PC-9 (cell line): ENCODE measurements at regions of chr17 and their contacts with region 1.

Region 1: GRCh38 chr17:70254735-70255460 is 85.6 kb downstream of the KCNJ2 start:
- DNase-seq: no peak
- H3K4me3 ChIP-seq: no peak overlapping the region
- H3K27ac ChIP-seq: no peak overlapping the region
- H3K4me1 ChIP-seq: no peaks in the 10 kb centered on the region; the same call in 1 of the 2 replicates
- H3K27me3 ChIP-seq: no peaks in the 10 kb centered on the region
- CTCF ChIP-seq: no peak

Region 2: GRCh38 chr17:70116919-70117318 is 138.0 kb before region 1 on chr17:
- CTCF ChIA-PET with region 1: no interaction called
- POLR2A ChIA-PET with region 1: interaction called, 20 read pairs
- intact Hi-C with region 1: no loop called
- DNase-seq: no peak
- H3K4me3 ChIP-seq: no peak overlapping the region
- H3K27ac ChIP-seq: no peak overlapping the region
- H3K4me1 ChIP-seq: no peaks in the 10 kb centered on the region
- H3K27me3 ChIP-seq: no peaks in the 10 kb centered on the region
- CTCF ChIP-seq: no peak

Region 3: GRCh38 chr17:70468661-70469060 is 213.8 kb after region 1 on chr17:
- CTCF ChIA-PET with region 1: no interaction called
- POLR2A ChIA-PET with region 1: no interaction called
- intact Hi-C with region 1: no loop called
- DNase-seq: no peak
- H3K4me3 ChIP-seq: no peak overlapping the region
- H3K27ac ChIP-seq: no peak overlapping the region
- H3K4me1 ChIP-seq: no peaks in the 10 kb centered on the region
- H3K27me3 ChIP-seq: no peaks in the 10 kb centered on the region
- CTCF ChIP-seq: no peak

Region 4: DNA sequence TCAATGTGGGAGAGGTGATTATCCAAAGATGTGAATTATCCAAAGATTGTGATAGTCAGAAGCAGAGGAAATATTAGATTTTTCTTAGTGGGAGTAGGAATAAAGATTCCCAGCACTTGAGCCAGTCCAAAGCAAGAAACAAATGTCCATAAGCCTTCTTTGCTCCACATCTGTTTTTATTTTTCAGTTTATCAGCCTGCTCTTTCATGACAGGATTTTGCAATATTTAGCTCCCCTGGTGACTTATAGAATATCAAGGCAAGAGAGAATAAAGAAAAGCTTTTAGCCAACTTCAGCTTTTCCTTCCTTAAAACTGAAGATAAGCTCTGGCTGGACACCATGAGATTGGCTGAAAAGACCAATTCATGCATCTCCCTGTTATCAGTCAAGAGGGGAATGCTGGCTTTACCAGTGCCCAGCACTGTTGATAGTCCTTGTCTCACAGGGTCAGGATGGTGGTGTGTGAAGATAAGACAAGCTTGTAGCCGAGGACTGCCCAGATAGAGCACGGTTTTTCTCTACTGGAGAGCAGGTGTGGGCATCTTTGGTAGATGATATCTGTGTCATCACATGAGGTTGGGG is 620.9 kb after region 1 on chr17:
- CTCF ChIA-PET with region 1: no interaction called
- POLR2A ChIA-PET with region 1: no interaction called
- intact Hi-C with region 1: no loop called
- DNase-seq: no peak
- H3K4me3 ChIP-seq: no peak overlapping the region
- H3K27ac ChIP-seq: no peak overlapping the region
- H3K4me1 ChIP-seq: no peaks in the 10 kb centered on the region
- H3K27me3 ChIP-seq: no peaks in the 10 kb centered on the region
- CTCF ChIP-seq: no peak